ENCODE measurements at regions of chr10 and their contacts with region 1.

Region 1: DNA sequence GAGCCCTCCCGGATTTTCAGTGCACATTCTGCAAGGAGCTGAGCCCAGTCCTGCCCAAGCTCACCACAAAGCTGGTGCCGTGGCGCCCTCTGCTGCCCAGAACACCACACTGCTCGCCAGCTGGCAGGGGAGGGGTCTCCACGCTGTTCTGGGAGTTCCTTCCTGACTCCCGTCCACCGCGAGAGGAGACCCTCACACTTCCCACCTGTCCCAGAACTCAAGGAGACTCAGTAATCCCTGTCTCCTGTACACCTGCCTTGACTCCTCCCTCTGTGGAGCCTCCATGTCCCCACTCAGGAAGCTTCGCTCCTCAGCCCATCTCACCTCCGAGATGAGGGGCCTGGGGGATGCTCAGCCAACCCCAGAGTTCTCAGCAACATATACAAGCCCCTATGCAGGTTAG is 11.3 kb downstream of the C10orf105 start:
- ATAC-seq: peak; percentile 21 to 90 (median 84)
- H3K4me3 ChIP-seq: no peak overlapping the region
- H3K27ac ChIP-seq: no peak overlapping the region
- H3K4me1 ChIP-seq: peaks cover 2 to 5% of the 10 kb centered on the region in 2 donors

Region 2: DNA sequence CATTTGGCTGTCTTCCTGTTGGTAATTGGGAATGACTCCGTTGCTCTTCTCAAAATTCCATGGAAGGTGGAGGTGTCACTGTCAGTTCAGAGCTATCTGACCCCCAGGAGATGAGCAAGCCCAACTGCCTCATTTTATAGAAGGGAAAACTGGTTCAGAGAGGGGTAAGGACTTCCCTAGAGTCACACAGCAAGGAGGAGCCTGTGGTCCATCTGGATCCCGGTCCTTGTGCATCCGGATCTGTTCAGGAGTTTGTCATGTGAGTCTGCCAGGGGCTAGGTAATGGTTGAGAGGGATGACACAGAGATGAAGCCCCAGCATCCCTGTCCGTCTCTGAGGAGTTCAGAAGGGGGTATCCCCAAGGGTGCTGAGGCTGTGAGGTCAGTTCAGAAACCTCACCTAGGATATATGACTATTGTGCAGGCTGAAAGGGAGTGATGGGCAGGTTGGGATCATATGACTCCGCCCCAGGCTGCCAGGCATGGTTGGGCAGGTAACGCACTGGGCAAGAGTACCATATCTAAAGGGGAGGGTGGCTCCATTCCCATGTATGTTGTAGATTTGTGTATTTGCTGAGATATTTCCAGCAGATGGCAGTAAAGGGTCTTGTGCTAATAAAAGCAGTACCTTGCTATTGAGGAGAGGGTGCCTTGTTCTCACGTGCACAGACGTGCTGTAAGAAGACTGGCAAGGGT is 405.3 kb before region 1 on chr10:
- in situ Hi-C with region 1: loop called in 5 of 9 experiments (anchors 10 to 25 kb)
- ATAC-seq: peak; percentile 13 to 61 (median 52)
- H3K4me3 ChIP-seq: no peak overlapping the region
- H3K27ac ChIP-seq: no peak overlapping the region
- H3K4me1 ChIP-seq: peaks cover 23 to 26% of the 10 kb centered on the region in 2 donors

Region 3: DNA sequence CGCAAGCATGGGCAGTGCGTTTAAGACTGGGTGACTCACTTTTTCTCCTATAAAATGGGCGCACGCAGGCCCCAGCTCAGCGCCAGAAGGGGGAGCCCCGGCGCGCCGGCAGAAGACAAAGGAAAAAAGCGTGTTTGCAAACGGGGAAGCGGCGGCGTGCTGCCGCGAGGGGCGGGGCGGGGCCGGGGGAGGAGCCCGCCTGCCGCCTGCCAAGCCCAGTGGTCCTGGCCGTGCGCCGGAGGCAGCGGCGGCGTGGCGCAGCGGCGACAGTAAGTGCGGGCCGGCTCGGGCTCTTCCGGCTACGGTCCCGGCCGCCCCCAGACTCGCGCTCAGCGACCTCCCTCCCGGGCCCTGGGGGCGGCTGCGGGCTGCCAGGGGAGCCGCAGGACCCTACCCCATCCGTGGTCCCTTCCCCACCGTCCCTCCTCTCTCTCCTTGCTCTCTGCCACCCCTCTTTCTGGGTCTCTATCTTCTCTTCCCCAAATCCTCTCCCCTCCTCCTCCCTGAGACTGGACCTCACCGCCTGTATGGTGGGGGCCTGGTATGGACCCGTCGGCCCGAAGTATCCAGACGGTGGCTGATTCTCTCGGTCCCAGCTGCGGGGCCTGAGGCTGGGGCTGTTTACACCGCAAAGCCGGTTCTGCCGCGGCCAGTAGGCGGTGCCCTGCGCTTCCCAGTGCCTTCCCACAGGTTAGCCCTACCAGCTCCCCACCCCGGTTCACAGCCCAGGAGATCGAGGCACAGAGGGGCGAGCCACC is 389.1 kb before region 1 on chr10 and contains the start of gene SLC29A3:
- in situ Hi-C with region 1: loop called in 5 of 9 experiments (anchors 10 to 25 kb)
- ATAC-seq: peak; percentile 88 to 95 (median 92)
- H3K4me3 ChIP-seq: peak within 1 kb of the TSS; percentile 47 to 68 (median 53)
- H3K27ac ChIP-seq: peak within 1 kb of the TSS; percentile 69 to 73
- H3K4me1 ChIP-seq: peaks cover 17% of the 10 kb centered on the region in 2 donors
- total RNA-seq, gene SLC29A3: 2.3 to 7.6 (median 4.1) TPM

Region 4: DNA sequence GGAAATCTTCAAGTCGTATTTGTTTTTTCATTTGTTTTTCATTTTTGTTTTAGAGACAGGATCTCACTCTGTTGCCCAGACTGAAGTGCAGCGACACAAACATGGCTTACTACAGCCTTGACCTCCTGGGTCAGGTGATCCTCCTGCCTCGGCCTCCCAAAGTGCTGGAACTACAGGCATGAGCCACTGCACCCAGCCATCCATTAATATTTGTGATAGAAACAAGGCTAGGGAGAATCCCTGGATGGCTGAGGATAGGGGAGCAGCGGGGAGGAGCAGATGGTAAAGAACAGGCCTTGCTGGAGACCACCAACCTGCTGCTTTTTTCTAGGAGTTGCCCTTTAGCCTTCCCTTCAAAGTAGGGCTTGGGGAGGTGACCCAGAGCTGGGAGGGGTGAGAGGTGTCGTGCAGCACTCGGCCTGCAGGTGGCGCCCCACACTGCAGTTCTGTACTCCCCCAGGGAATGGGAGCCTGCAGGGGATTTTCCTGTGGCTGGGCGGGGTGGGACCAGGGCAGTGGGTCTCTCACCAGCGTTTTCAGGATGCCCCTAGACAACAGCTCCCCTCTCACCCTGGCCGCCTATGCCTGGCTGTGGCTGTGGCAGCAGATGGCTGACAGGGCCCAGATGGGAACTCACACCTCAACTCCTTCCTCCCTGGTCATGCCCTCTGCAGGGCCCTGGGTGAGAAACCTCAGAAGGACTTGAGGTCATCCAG is 324.2 kb before region 1 on chr10:
- in situ Hi-C with region 1: loop called in 6 of 9 experiments (anchors 10 to 25 kb)
- ATAC-seq: peak; percentile 82 to 94 (median 89)
- H3K4me3 ChIP-seq: no peak overlapping the region
- H3K27ac ChIP-seq: no peak overlapping the region
- H3K4me1 ChIP-seq: peaks cover 0 to 7% of the 10 kb centered on the region in 2 donors

Measured in motor neuron (in vitro differentiated cells).